PC-3 (cell line): ENCODE measurements at regions of chr11 and their contacts with region 1.

Region 1: GRCh38 chr11:44565211-44565952 is at the start of gene CD82:
- DNase-seq: peak; percentile 96
- ATAC-seq: peak; percentile 95
- H3K4me3 ChIP-seq: peak within 1 kb of the TSS; percentile 76
- H3K27ac ChIP-seq: peak within 1 kb of the TSS; percentile 52
- H3K4me1 ChIP-seq: peaks cover 21% of the 10 kb centered on the region
- H3K27me3 ChIP-seq: no peaks in the 10 kb centered on the region
- CTCF ChIP-seq: no peak
- total RNA-seq, gene CD82: 4.3 and 5.0 TPM in 2 replicates

Region 2: DNA sequence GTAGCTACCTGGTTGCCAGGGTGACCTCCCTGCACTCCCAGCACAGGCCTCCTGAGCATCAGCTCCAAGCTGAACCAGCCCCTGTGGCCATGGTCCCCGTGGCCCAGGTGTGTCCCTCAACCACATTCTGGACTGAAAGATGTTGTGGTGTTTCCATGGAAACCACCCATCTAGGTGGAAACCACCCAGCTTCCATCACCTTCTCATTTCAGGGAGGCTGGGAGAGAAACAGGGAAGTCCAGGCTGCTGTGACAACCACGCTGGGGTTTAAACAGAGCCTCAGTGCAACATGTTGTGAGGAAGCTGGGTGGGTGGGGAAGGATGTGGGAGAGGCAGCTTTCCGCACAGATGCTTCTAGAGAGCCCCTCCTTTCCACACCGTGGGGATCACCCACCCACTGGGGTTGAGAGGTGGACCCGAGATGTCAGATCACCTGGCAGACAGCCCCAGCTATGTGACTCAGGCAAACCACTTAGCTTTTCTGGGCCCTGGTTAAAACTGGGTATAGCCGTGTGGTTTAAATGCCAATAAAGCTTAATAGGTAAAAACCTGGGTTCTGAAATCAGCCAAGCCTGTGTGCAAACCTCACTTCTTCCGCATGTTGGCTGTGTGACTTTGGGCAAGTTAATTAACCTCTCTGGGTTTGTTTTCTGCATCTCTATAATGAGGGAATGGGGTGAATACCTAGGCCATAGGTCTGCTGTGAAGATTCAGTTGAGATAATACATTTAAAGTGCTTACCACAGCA is 46.5 kb after region 1 on chr11:
- CTCF ChIA-PET with region 1: interaction called, 33 read pairs
- POLR2A ChIA-PET with region 1: no interaction called
- intact Hi-C with region 1: loop called (anchors 2 kb)
- DNase-seq: no peak
- ATAC-seq: no peak
- H3K4me3 ChIP-seq: no peak overlapping the region
- H3K27ac ChIP-seq: no peak overlapping the region
- H3K4me1 ChIP-seq: no peaks in the 10 kb centered on the region
- H3K27me3 ChIP-seq: no peaks in the 10 kb centered on the region
- CTCF ChIP-seq: no peak